Heart left ventricle (tissue), 16 donors: ENCODE measurements at regions of chr9 and their contacts with region 1.

Region 1: DNA sequence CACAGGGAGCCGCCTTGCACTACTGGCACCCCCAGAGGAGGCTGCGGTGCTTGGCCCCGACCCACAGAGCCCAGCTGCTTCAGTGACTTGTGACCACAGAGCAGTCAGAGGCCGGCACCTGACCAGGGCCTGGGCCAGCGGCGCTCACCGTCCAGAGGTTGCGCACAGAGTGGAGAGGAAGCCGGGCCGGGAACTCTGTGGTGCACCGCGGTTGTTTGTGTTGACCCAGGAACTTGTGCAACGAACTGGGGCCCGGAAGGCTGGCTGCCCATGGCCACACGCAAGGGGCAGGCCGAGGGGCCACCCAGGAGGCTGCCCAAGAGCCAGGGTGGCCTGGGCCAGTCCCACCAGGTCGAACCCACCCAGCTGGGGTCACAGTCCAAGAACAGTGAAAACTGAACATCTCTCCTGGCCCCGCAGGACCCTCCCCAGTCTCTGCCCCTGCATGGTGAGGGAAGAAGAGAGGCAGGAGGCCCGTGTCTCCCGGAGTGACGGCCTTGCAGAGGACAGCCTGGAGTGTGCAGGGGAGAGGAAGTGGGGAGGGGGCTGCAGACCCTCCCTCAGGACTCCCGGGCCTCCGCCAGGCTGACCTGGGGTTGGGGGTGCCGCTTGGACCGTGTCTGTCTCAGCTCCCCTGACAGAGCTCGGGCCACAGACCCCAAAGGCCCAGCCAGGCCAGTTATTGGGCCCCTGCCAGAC is 42.8 kb upstream of the EGFL7 start:
- DNase-seq: peak in 4 of 5 donors; percentile 71 to 89 (median 75)
- ATAC-seq: peak in 3 of 4 donors; percentile 16 to 54 (median 41)
- H3K4me3 ChIP-seq: no peak overlapping the region
- H3K27ac ChIP-seq: peak overlapping the region in 2 of 12 donors; percentile 48 to 67
- H3K4me1 ChIP-seq: peaks cover 7 to 75% (median 25%) of the 10 kb centered on the region in 12 donors
- H3K27me3 ChIP-seq: no peaks in the 10 kb centered on the region
- CTCF ChIP-seq: no peak
- POLR2A ChIP-seq: no peak

Region 2: DNA sequence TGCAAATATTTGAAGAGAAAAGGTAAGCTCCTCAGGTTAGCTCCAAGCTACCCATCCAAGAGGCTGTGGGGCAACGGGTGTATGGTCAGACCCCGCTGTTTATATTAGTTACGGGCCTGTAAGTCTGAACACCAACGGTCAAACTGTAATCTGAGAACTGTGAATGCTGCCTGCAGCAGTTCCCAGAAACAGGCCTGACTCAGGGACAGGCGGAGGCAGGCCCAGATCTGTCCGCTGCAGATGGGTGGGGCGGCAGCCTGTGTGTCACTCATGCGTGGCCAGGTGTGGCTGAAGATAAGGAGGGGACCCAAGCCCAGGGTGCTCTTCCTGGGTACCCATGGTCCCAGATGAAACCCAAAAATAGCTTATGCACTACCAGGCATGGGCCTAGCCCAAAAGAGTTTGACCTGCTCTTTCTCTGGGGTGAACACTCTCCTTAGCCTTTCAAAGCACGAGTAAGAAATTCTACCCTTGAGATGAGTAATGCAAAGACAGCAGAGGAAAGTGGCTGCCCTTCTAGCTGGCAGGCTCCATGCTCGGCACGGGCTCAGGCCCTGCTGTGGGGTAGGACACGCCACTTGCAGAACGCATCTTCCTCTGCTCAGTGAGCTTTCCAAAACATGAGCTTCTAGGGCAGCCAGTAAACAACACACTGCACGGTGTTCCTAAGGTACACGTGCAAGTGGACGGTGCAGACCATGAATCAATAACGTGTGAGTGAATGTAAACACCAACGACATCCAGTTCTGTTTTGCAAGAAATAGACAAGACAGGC is 667.8 kb before region 1 on chr9:
- intact Hi-C with region 1: no loop called
- DNase-seq: no peak
- ATAC-seq: peak in 1 of 4 donors; percentile 16
- H3K4me3 ChIP-seq: no peak overlapping the region
- H3K27ac ChIP-seq: no peak overlapping the region
- H3K4me1 ChIP-seq: peaks cover 0 to 29% (median 8%) of the 10 kb centered on the region in 12 donors
- H3K27me3 ChIP-seq: no peaks in the 10 kb centered on the region
- CTCF ChIP-seq: no peak
- POLR2A ChIP-seq: no peak

Region 3: GRCh38 chr9:136564379-136564988 is 55.4 kb before region 1 on chr9:
- intact Hi-C with region 1: no loop called
- DNase-seq: peak; percentile 71 to 92 (median 87)
- ATAC-seq: peak; percentile 52 to 72 (median 65)
- H3K4me3 ChIP-seq: peak overlapping the region in 2 of 12 donors; percentile 5 to 14
- H3K27ac ChIP-seq: peak overlapping the region; percentile 44 to 93 (median 80)
- H3K4me1 ChIP-seq: peaks cover 30 to 75% (median 65%) of the 10 kb centered on the region in 12 donors
- H3K27me3 ChIP-seq: no peaks in the 10 kb centered on the region
- CTCF ChIP-seq: peak in 5 of 12 donors; percentile 14 to 40 (median 32)
- POLR2A ChIP-seq: no peak

Region 4: DNA sequence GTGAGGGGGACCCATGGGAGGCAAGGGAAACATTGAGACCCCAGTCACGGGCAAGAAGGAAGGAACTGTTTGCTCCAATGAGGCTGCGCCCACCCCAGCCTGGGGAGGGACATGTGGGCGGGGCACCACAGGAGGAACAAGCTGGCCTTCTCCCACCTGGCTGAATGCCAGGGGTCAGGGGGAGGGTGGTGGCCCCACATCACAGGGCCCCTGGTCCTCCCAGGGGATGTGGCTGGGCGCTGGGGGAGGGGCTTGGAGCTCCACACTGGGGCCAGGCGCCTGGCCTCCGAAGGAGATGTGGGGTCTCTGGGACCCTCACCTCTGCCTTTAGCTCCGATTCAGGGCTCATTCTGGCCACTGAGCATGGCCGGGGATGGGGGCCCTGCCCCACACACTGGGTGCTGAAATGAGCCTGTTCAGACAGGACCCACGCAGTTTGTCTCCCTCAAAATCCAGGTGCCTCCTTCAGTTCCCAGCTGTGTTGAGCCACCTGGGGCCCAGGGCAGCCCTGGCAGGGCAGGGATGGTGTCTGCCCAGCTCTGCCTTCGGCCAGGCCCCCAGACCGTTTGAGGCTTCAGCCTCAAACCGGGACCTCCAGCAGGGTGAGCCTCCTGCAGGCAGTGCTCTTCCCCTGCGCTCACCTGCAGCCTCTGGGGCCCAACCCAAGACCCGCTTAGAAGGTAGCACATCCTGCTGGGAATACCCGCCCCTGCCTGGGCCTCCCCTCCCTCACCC is 40.8 kb before region 1 on chr9:
- intact Hi-C with region 1: loop called in 1 of 10 experiments (anchors 5 kb)
- DNase-seq: peak in 2 of 5 donors; percentile 52 to 76
- ATAC-seq: peak in 2 of 4 donors; percentile 10 to 18
- H3K4me3 ChIP-seq: no peak overlapping the region
- H3K27ac ChIP-seq: peak overlapping the region in 2 of 12 donors; percentile 14 to 34
- H3K4me1 ChIP-seq: peaks cover 4 to 28% (median 14%) of the 10 kb centered on the region in 12 donors
- H3K27me3 ChIP-seq: no peaks in the 10 kb centered on the region
- CTCF ChIP-seq: no peak
- POLR2A ChIP-seq: no peak